Activated CD4-positive, alpha-beta memory T cell treated with anti-CD3 and anti-CD28 coated beads for 36 hours (primary cell): ENCODE measurements at regions of chr16 and their contacts with region 1.

Region 1: DNA sequence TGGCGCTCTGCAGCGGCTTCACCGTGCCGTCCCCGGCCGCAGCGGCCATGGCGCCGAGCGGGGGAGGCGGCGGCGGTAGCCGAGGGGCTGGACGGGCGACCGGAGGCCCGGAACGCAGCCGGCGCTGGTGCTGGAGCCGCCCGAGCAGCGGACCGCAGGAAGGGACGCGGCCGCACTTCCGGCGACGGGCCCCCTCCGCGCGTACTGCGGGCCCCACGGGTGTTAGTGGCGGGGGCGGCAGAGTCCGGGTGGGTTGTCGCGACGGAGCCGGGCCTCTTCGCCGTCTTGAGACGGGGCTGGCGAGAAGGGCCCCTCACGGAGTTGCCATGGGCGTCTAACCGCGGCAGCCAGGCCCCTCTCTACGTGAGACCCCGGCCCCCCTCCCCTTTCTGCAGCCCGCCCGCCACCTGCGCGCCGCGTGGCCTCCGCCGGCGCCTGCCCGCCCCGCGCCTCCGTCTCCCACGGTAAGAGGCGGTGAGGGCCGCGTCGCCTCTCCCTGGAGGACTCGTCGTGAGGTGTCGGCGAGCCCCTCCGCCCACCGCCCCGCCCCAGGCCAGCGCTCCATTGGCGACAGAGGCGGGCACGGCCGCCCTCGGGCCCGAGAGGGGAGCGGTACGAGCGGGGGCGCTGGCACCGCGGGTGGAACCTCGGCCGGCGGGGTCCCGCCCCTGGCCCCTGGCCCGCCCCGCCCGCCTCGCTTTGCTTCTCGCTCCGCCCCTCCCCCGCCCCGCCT is at the starts of genes VPS9D1 and ZNF276:
- DNase-seq: peak; percentile 87
- H3K4me3 Mint-ChIP-seq: peak within 1 kb of the TSS; percentile 87
- H3K27ac Mint-ChIP-seq: peak within 1 kb of the TSS; percentile 88
- H3K4me1 Mint-ChIP-seq: peaks cover 38% of the 10 kb centered on the region
- H3K27me3 Mint-ChIP-seq: no peaks in the 10 kb centered on the region
- total RNA-seq, gene VPS9D1: 2.9 to 3.2 TPM
- total RNA-seq, gene ZNF276: 22.1 to 25.6 TPM

Region 2: GRCh38 chr16:89737341-89738071 is 16.5 kb after region 1 on chr16:
- CTCF ChIA-PET with region 1: no interaction called
- POLR2A ChIA-PET with region 1: interaction called, 5 read pairs
- intact Hi-C with region 1: loop called (anchors 2 kb)
- DNase-seq: peak; percentile 65
- H3K4me3 Mint-ChIP-seq: peak overlapping the region; percentile 32
- H3K27ac Mint-ChIP-seq: peak overlapping the region; percentile 45
- H3K4me1 Mint-ChIP-seq: peaks cover 20% of the 10 kb centered on the region
- H3K27me3 Mint-ChIP-seq: no peaks in the 10 kb centered on the region

Region 3: GRCh38 chr16:89749647-89750046 is 28.7 kb after region 1 on chr16:
- CTCF ChIA-PET with region 1: no interaction called
- POLR2A ChIA-PET with region 1: no interaction called
- intact Hi-C with region 1: no loop called
- DNase-seq: no peak
- H3K4me3 Mint-ChIP-seq: no peak overlapping the region
- H3K27ac Mint-ChIP-seq: no peak overlapping the region
- H3K4me1 Mint-ChIP-seq: no peaks in the 10 kb centered on the region
- H3K27me3 Mint-ChIP-seq: no peaks in the 10 kb centered on the region

Region 4: GRCh38 chr16:89764711-89765201 is 43.8 kb after region 1 on chr16:
- CTCF ChIA-PET with region 1: no interaction called
- POLR2A ChIA-PET with region 1: interaction called, 3 read pairs
- intact Hi-C with region 1: loop called (anchors 5 kb)
- DNase-seq: peak; percentile 72
- H3K4me3 Mint-ChIP-seq: peak overlapping the region; percentile 48
- H3K27ac Mint-ChIP-seq: peak overlapping the region; percentile 61
- H3K4me1 Mint-ChIP-seq: peaks cover 46% of the 10 kb centered on the region
- H3K27me3 Mint-ChIP-seq: no peaks in the 10 kb centered on the region